Esophagus squamous epithelium (tissue), 5 donors: ENCODE measurements at regions of chr14 and their contacts with region 1.

Region 1: GRCh38 chr14:100271247-100271939 is 32.4 kb downstream of the YY1 start:
- DNase-seq: no peak
- H3K4me3 ChIP-seq: no peak overlapping the region
- H3K27ac ChIP-seq: peak overlapping the region in 1 of 4 donors; percentile 1
- H3K4me1 ChIP-seq: peaks cover 0 to 50% (median 0%) of the 10 kb centered on the region in 3 donors
- H3K27me3 ChIP-seq: no peaks in the 10 kb centered on the region
- CTCF ChIP-seq: peak; percentile 22 to 56 (median 48)
- POLR2A ChIP-seq: no peak

Region 2: GRCh38 chr14:100140452-100141078 is 130.8 kb before region 1 on chr14:
- intact Hi-C with region 1: no loop called
- DNase-seq: no peak
- H3K4me3 ChIP-seq: peak overlapping the region in 1 of 4 donors; percentile 27
- H3K27ac ChIP-seq: peak overlapping the region; percentile 40 to 82 (median 62)
- H3K4me1 ChIP-seq: peaks cover 13 to 53% (median 14%) of the 10 kb centered on the region in 3 donors
- H3K27me3 ChIP-seq: no peaks in the 10 kb centered on the region
- CTCF ChIP-seq: no peak
- POLR2A ChIP-seq: no peak

Region 3: DNA sequence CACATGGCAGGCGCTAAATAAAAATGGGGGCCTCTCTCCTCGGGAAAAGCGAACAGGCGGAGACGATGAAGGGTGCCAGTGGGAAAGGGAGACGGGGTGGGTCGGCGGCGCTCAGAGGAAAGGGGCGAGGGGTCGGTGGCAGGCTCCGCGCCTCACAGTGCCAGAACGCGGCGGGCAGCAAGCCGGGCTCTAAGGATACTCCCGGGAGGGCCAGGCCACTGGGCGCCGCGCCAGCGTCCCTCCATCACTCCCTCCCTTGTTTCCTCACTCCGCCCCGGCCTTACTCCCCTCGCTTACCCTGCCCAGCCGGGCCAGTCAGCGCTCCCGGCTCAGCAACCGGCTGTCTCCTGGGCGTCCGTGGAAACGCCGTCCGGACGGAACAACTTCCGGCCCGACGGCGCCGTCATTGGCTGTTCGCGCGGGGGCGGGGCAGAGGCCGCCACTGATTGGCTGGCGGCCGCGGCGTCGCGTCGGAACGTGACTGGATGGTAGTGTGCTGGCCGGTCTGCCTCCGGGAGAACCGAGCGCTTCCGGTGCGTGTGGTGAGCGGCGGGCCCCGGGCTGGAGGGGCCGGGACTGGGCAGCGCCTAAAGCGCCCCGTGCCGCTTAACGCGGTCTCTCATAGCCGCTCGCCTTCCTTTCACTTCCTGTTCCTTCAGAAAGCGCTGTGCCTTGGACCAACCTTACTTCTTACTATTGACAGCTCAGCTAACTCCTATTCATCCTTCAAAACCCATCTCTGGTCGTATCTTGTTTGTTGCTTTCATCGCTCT is 104.8 kb after region 1 on chr14:
- intact Hi-C with region 1: loop called (anchors 10 kb)
- DNase-seq: peak; percentile 64
- H3K4me3 ChIP-seq: peak within 1 kb of the TSS; percentile 53 to 79 (median 74)
- H3K27ac ChIP-seq: peak within 1 kb of the TSS; percentile 87 to 95 (median 90)
- H3K4me1 ChIP-seq: peaks cover 12 to 64% (median 30%) of the 10 kb centered on the region in 3 donors
- H3K27me3 ChIP-seq: no peaks in the 10 kb centered on the region
- CTCF ChIP-seq: peak in 2 of 6 experiments; percentile 7 to 45
- POLR2A ChIP-seq: peak in 3 of 4 donors; percentile 25 to 85 (median 51)

Region 4: GRCh38 chr14:100988411-100988900 is 717.1 kb after region 1 on chr14:
- intact Hi-C with region 1: no loop called
- DNase-seq: no peak
- H3K4me3 ChIP-seq: no peak overlapping the region
- H3K27ac ChIP-seq: no peak overlapping the region
- H3K4me1 ChIP-seq: no peaks in the 10 kb centered on the region
- H3K27me3 ChIP-seq: no peaks in the 10 kb centered on the region
- CTCF ChIP-seq: no peak
- POLR2A ChIP-seq: no peak